Activated naive CD4-positive, alpha-beta T cell treated with anti-CD3 and anti-CD28 coated beads, Interleukin-2, amount 10 ng/mL, durations not matched to agents 7 days and 5 days (primary cell): ENCODE measurements at regions of chr11 and their contacts with region 1.

Region 1: GRCh38 chr11:34174412-34175041 is 69.1 kb downstream of the NAT10 start:
- DNase-seq: peak; percentile 87
- H3K4me3 Mint-ChIP-seq: peak overlapping the region; percentile 31
- H3K27ac Mint-ChIP-seq: no peak overlapping the region
- H3K4me1 Mint-ChIP-seq: peaks cover 18% of the 10 kb centered on the region
- H3K27me3 Mint-ChIP-seq: peaks cover 30% of the 10 kb centered on the region

Region 2: GRCh38 chr11:33970984-33971466 is 203.5 kb before region 1 on chr11:
- CTCF ChIA-PET with region 1: no interaction called
- DNase-seq: peak; percentile 30
- H3K4me3 Mint-ChIP-seq: no peak overlapping the region
- H3K27ac Mint-ChIP-seq: no peak overlapping the region
- H3K4me1 Mint-ChIP-seq: no peaks in the 10 kb centered on the region
- H3K27me3 Mint-ChIP-seq: peaks cover 5% of the 10 kb centered on the region

Region 3: DNA sequence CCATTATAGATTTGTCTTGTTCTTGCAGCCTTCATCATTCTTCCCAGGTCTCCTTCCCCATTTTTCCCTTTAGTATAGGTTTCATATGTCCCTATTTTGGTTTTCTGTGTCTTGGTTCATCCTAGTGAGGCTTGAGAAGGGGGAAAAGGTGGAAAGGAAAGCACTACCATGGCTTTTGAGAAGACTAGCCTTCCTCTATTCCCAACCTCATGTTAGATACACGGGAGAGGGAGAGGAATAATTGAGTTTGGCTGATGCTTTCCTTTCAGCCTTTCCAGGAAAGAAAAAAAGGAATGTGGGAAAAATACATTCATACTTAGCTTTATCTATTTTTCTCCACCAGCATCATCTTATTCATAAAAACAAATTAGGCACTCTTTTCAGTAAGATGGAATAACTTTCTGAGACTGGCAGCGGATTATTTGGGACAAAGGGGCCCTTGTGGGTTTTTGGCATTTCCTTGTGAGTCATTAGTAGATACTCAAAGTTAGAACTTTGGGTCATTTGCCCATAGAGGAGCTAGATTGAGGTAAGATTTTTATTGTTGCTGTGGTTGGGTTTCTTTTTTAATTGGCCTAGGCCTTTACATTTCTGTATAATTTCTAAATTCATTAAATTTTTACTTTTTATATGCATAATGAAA is 99.2 kb before region 1 on chr11:
- CTCF ChIA-PET with region 1: no interaction called
- DNase-seq: no peak
- H3K4me3 Mint-ChIP-seq: no peak overlapping the region
- H3K27ac Mint-ChIP-seq: no peak overlapping the region
- H3K4me1 Mint-ChIP-seq: peaks cover 18% of the 10 kb centered on the region
- H3K27me3 Mint-ChIP-seq: no peaks in the 10 kb centered on the region

Region 4: DNA sequence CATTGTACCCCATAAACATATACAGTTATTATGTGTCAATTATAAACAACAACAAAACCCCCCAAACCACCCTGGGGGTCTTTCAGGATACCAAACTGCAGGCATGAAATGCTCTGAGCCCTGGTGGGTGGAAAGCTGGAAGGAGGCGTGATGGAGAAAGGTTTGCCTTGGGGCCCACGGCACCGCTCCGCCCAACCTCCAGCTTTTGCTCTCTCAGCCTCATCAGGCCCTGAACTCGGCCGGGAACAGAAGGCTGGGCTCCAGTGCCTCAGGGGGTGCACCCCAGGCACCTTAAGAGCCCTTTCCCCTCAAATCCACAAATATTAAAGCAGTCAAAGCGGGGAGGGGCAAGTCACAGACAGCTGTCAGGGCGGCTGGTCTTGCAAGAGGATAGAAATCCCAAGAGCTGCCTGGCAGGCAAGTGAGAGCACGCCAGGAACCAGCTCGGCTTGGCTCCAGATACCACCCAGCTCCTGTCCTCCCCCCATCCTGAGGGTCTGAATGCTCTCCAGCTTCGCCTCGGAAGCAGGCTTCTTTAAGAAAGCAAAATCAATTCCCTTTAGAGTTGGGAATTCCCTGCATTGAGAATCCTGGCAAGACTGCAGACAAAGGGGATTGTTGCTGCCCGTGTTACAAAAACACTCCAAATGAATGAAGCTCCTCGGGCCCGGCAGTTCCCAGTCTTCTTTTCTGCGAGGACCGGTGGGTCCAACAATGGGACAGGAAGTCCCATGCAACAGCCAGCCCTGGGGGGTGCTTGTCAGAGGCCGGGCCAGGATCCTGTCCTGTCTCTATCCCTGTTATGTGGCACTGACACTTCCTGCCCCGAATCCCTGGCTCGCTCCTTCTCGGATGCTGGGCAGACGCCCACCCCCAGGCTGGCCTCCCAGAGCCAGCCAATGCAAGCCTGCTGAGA is 11.7 kb after region 1 on chr11:
- CTCF ChIA-PET with region 1: interaction called, 14 read pairs
- DNase-seq: no peak
- H3K4me3 Mint-ChIP-seq: no peak overlapping the region
- H3K27ac Mint-ChIP-seq: no peak overlapping the region
- H3K4me1 Mint-ChIP-seq: no peaks in the 10 kb centered on the region
- H3K27me3 Mint-ChIP-seq: peaks cover 10% of the 10 kb centered on the region

Region 5: GRCh38 chr11:34250732-34251639 is 76.5 kb after region 1 on chr11:
- CTCF ChIA-PET with region 1: interaction called, 11 read pairs
- DNase-seq: peak; percentile 81
- H3K4me3 Mint-ChIP-seq: peak overlapping the region; percentile 46
- H3K27ac Mint-ChIP-seq: peak overlapping the region; percentile 43
- H3K4me1 Mint-ChIP-seq: peaks cover 62% of the 10 kb centered on the region
- H3K27me3 Mint-ChIP-seq: peaks cover 58% of the 10 kb centered on the region

Region 6: DNA sequence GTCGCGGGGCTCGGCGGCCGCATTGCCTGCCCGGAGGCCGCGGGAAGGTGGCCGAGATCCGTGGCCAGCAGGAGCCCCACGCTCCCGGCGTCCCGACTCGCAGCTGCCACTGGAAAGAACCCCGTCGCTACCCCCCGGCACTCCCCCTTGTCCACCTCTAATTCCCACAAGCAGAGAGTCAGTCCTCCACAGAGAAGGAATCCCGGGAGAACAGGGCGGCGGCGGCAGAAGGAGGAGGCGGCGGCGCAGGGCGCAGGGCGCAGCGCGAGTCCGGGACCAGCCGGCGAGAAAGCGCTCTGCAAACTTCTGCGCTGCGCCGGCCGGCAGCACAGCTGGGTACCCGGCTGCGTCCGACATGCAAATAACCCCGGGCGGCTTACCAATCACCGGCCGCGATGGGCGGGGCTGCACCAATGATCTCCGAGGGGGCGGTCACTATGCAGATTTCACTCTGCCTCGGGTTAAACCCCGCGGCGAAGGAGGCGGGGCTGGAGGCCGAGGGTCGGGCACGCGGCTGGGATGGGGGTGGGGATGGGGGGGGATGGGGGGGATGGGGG is 183.3 kb after region 1 on chr11 and contains the start of gene ABTB2:
- CTCF ChIA-PET with region 1: interaction called, 73 read pairs
- DNase-seq: peak; percentile 99
- H3K4me3 Mint-ChIP-seq: peak within 1 kb of the TSS; percentile 76
- H3K27ac Mint-ChIP-seq: peak within 1 kb of the TSS; percentile 81
- H3K4me1 Mint-ChIP-seq: peaks cover 23% of the 10 kb centered on the region
- H3K27me3 Mint-ChIP-seq: peaks cover 50% of the 10 kb centered on the region

Region 7: DNA sequence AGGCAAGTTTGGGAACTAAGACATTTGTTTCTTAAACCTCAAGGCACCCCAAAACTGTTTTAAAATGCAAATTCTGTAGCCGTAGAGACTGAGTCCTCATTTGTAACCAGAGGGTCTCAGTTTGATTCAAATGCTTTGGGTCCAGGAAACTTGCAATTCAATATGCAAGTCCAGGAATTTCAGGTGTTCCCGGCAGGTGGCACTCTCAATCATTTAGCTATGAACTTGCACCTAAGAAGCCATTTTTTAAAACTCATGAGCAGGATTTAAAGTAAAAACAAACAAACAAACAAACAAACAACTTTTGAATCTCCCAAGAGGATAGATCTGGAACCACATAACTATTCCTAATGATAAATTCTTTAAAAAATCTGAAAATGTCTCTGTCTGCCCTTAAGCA is 192.0 kb after region 1 on chr11:
- CTCF ChIA-PET with region 1: interaction called, 26 read pairs
- DNase-seq: peak; percentile 41
- H3K4me3 Mint-ChIP-seq: no peak overlapping the region
- H3K27ac Mint-ChIP-seq: no peak overlapping the region
- H3K4me1 Mint-ChIP-seq: peaks cover 8% of the 10 kb centered on the region
- H3K27me3 Mint-ChIP-seq: peaks cover 31% of the 10 kb centered on the region